ENCODE measurements at regions of chr19 and their contacts with region 1.

Region 1: DNA sequence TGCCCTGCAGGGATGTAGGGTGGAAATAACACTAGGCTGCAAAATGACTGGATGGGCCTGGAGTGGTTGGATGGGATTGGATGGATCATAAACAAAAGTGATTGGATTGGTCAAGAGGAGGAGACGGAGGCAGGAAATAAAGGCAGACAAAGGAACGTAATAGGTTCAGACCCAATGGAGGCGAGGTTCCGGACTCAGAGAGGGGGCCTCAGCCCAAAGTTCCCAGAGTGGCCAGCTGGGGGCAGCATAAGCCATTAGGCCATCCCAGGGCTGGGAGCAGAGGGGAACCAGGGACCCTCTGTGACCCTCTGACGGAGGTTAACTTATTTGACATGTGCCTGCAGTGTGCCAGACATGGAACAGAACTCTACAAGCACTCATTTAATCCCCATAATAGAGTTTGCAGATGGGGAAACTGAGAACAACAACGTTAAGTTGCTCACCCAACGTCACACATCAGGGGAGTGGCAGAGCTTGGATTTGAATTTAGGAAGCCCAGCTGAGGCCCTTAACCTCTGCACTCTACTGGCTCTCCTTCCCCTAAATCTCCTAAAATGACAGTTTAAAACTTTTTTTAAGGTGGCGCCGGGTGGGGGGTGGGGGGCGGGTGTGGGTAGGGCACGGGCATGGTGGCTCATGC is 15.3 kb upstream of the MAP1S start:
- DNase-seq: no peak
- ATAC-seq: peak; percentile 93
- H3K4me3 ChIP-seq: no peak overlapping the region
- H3K27ac ChIP-seq: no peak overlapping the region
- H3K4me1 ChIP-seq: no peaks in the 10 kb centered on the region
- H3K27me3 ChIP-seq: no peaks in the 10 kb centered on the region; a peak in 1 of 4 replicates
- CTCF ChIP-seq: peak; percentile 82 to 93 (median 88)
- EP300 ChIP-seq: no peak
- POLR2A ChIP-seq: no peak
- RAD21 ChIP-seq: peak; percentile 80

Region 2: GRCh38 chr19:17784201-17785008 is 80.5 kb after region 1 on chr19:
- CTCF ChIA-PET with region 1: interaction called, 36 read pairs
- POLR2A ChIA-PET with region 1: no interaction called
- RAD21 ChIA-PET with region 1: interaction called, 4 read pairs
- SMC1A ChIA-PET with region 1: interaction called, 10 read pairs
- in situ Hi-C with region 1: no loop called
- intact Hi-C with region 1: loop called (anchors 1 kb)
- DNase-seq: no peak
- ATAC-seq: peak; percentile 88
- H3K4me3 ChIP-seq: no peak overlapping the region
- H3K27ac ChIP-seq: no peak overlapping the region
- H3K4me1 ChIP-seq: no peaks in the 10 kb centered on the region
- H3K27me3 ChIP-seq: no peaks in the 10 kb centered on the region
- CTCF ChIP-seq: peak; percentile 79 to 84 (median 83)
- EP300 ChIP-seq: no peak
- POLR2A ChIP-seq: no peak
- RAD21 ChIP-seq: peak; percentile 79

Region 3: GRCh38 chr19:17854061-17854460 is 150.1 kb after region 1 on chr19:
- CTCF ChIA-PET with region 1: interaction called, 43 read pairs
- POLR2A ChIA-PET with region 1: interaction called, 4 read pairs
- RAD21 ChIA-PET with region 1: interaction called, 8 read pairs
- SMC1A ChIA-PET with region 1: interaction called, 19 read pairs
- in situ Hi-C with region 1: loop called (anchors 5 kb)
- intact Hi-C with region 1: loop called (anchors 1 kb)
- DNase-seq: no peak
- ATAC-seq: no peak
- H3K4me3 ChIP-seq: no peak overlapping the region
- H3K27ac ChIP-seq: no peak overlapping the region
- H3K4me1 ChIP-seq: peaks cover 15% of the 10 kb centered on the region
- H3K27me3 ChIP-seq: no peaks in the 10 kb centered on the region
- CTCF ChIP-seq: no peak
- EP300 ChIP-seq: no peak
- POLR2A ChIP-seq: no peak
- RAD21 ChIP-seq: no peak